ENCODE measurements at regions of chr5 and their contacts with region 1.

Region 1: GRCh38 chr5:148730943-148731861 is 76.9 kb upstream of the HTR4 start:
- DNase-seq: peak; percentile 38
- H3K4me3 ChIP-seq: no peak overlapping the region
- CTCF ChIP-seq: peak; percentile 75

Region 2: GRCh38 chr5:148179234-148179824 is 551.9 kb before region 1 on chr5:
- CTCF ChIA-PET with region 1: interaction called, 101 read pairs
- POLR2A ChIA-PET with region 1: no interaction called
- DNase-seq: peak; percentile 5
- H3K4me3 ChIP-seq: no peak overlapping the region
- CTCF ChIP-seq: peak; percentile 53

Region 3: GRCh38 chr5:148437249-148437648 is 294.0 kb before region 1 on chr5:
- CTCF ChIA-PET with region 1: interaction called, 342 read pairs
- POLR2A ChIA-PET with region 1: no interaction called
- DNase-seq: no peak
- H3K4me3 ChIP-seq: no peak overlapping the region
- CTCF ChIP-seq: no peak

Region 4: DNA sequence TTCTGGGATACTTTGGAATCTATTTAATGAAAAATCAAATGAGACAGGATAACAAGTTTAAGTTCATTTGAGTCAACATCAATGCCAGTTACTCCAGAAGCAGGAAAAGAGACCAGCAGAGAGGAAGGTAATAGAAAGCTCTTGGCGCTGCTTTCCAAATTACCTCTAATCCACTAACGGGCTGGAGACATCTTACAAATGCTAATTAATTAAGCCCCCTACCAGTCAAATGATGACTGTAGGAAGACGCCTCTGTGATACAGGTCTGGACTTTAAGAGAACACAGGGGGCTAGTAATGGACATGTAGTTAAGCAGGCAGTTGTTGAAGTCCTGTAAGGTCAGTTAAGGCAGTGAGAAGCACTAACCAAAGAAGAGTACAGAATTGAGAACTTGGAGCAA is 11.6 kb before region 1 on chr5:
- CTCF ChIA-PET with region 1: interaction called, 45 read pairs
- POLR2A ChIA-PET with region 1: no interaction called
- DNase-seq: no peak
- H3K4me3 ChIP-seq: no peak overlapping the region
- CTCF ChIP-seq: no peak

Region 5: DNA sequence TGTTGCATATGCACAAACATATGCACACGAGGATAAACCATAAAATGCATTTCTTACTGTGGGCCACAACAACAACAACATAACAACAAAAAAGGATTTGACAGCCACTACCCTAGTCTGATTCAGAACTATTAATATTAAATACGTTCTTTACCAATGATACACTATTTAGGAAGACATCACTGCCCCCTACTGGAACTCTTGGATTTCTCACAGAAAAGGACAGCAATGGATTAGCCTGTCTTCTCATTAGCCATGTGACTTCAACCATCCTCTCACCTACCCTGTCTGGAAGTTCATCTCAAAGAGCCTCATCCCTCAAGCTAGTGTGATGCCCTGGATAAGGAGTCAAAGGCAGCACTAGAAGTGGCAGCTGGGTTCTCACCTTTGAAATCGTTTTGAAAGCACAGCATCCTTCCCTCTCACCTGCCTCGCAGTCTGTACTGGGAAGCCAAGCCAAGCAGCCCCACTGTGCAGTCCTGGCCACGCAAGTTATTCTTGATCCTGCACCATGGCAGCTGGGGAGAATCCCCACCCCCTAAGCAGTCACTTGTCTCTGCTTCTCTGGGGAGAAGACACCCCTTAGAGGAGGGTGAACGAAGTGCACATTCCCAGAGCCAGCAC is 267.1 kb after region 1 on chr5:
- CTCF ChIA-PET with region 1: interaction called, 517 read pairs
- POLR2A ChIA-PET with region 1: no interaction called
- DNase-seq: no peak
- H3K4me3 ChIP-seq: no peak overlapping the region
- CTCF ChIP-seq: peak; percentile 57

Region 6: DNA sequence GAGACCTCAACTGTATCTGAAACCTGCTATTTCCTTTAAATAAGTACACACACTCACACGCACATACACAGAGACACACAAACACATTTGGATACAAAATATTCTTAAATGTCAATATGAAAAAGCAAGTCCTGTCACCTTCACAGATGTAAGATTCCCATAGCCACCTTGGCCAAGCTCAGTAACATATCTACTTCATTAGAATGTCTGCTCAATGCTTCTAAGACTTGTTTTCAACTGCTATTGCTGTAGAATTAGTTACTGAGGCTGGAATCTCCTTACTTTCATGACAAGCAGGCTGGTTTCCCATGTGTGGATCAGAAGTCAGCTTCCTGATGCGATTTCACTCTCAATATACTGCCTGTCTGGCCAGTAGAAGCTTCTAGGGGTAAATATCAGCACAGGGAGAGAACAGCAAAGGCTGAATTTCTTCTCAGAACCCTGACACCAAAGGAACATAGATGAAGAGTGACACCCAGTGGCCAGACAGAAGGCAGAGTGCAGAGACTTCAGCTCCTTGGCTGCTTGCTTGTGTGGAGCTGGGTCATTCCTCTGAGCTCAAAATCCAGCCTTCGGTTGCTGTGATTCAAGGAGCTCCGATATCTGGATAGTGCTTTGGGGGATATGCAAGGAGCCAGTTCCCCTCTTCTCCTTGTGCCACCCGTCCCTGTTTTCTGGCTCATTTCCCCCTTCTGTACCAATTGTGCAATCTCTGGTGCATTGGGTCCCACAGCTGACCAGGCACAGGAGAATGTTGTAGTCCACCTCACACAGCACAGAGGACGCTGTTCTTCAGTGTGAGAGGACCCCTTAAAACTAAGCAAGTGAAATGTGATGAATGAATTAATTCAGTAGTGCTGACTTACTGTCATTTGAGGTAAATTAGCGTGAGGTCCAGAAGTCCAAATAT is 383.5 kb after region 1 on chr5:
- CTCF ChIA-PET with region 1: interaction called, 686 read pairs
- POLR2A ChIA-PET with region 1: no interaction called
- DNase-seq: peak; percentile 54
- H3K4me3 ChIP-seq: no peak overlapping the region
- CTCF ChIP-seq: peak; percentile 86